ENCODE measurements at regions of chr1 and their contacts with region 1.

Region 1: GRCh38 chr1:115302390-115302961 is 35.6 kb downstream of the NGF start:
- DNase-seq: peak; percentile 91
- H3K4me3 ChIP-seq: no peak overlapping the region
- H3K27me3 ChIP-seq: no peaks in the 10 kb centered on the region
- CTCF ChIP-seq: no peak

Region 2: GRCh38 chr1:115012006-115012405 is 290.5 kb before region 1 on chr1:
- CTCF ChIA-PET with region 1: no interaction called
- POLR2A ChIA-PET with region 1: no interaction called
- DNase-seq: no peak
- H3K4me3 ChIP-seq: no peak overlapping the region
- H3K27me3 ChIP-seq: no peaks in the 10 kb centered on the region
- CTCF ChIP-seq: no peak

Region 3: DNA sequence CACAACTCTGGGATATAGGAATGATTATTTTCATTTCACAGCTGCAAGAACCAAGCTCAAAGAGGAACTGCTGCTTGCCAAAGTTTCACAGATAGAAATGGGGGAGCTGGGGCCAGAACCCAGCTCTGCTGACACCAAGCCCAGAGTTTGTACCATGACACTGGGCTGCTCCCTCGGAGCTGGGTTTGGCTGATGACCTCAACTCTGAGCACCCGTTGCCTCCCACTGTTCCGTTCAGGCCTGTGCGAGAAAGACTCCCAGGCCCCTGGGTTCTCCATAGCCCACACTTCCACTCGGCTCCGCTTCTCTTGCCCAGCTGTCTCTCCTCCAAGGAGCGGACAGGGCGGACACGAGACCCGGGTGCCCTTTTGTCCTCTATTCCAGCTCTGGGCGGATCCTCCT is 19.7 kb before region 1 on chr1:
- CTCF ChIA-PET with region 1: interaction called, 14 read pairs
- POLR2A ChIA-PET with region 1: no interaction called
- DNase-seq: no peak
- H3K4me3 ChIP-seq: no peak overlapping the region
- H3K27me3 ChIP-seq: no peaks in the 10 kb centered on the region
- CTCF ChIP-seq: no peak

Region 4: GRCh38 chr1:115379943-115380342 is 77.5 kb after region 1 on chr1:
- CTCF ChIA-PET with region 1: no interaction called
- POLR2A ChIA-PET with region 1: no interaction called
- DNase-seq: no peak
- H3K4me3 ChIP-seq: no peak overlapping the region
- H3K27me3 ChIP-seq: no peaks in the 10 kb centered on the region
- CTCF ChIP-seq: no peak

Measured in BJ (cell line).